ENCODE measurements at regions of chr3 and their contacts with region 1.

Region 1: DNA sequence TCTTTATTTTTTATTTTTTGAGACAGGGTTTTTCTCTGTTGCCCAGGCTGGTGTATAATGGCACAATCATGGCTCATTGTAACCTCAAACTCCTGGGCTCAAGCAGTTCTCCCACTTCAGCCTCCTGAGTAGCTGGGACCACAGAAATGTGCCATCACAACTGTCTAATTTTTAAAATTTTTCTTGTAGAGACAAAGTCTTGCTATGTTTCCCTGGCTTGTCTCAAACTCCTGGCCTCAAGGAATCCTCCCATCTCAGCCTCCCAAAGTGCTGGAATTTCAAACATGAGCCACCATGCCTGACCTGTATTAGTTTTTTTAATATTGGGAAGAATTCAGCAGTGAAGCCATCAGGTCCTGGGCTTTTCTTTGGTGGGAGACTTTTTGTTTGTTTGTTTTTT is 13.6 kb upstream of the CLDN11 start:
- DNase-seq: no peak
- ATAC-seq: no peak
- H3K4me3 ChIP-seq: no peak overlapping the region
- H3K27ac ChIP-seq: no peak overlapping the region
- H3K4me1 ChIP-seq: no peaks in the 10 kb centered on the region
- H3K27me3 ChIP-seq: no peaks in the 10 kb centered on the region
- CTCF ChIP-seq: no peak
- POLR2A ChIP-seq: no peak
- RAD21 ChIP-seq: no peak

Region 2: DNA sequence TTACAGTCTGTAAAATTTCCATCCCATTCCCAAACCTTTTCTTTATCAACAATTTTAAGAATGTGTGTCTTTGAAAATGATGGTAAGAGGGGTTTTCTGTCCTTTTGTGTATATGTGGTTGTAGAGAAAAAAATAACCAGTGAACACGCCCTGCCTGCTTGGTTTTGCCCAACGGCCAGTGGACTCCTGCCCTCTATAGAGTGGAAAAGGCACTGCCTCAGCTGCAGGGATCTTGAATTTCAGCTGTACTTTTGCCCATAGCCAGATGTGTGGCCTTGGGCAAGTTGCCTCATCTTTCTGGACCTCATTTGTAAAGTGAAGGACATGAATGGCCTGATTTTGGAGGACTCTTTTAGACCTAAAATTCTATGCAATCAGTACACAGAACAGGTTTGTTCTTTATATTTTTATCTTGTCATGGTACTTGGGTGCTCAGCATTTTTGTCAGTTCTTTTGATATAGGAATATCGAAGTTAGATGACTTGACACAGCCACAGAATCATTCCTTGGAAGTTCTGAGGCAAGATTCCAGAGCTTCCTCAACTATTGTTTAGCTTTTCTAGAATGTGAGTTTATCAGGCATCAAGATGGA is 94.6 kb after region 1 on chr3:
- CTCF ChIA-PET with region 1: no interaction called
- POLR2A ChIA-PET with region 1: no interaction called
- RAD21 ChIA-PET with region 1: no interaction called
- intact Hi-C with region 1: loop called (anchors 5 kb)
- DNase-seq: peak; percentile 16
- ATAC-seq: peak; percentile 96
- H3K4me3 ChIP-seq: no peak overlapping the region
- H3K27ac ChIP-seq: no peak overlapping the region
- H3K4me1 ChIP-seq: no peaks in the 10 kb centered on the region
- H3K27me3 ChIP-seq: no peaks in the 10 kb centered on the region
- CTCF ChIP-seq: peak; percentile 39 to 82 (median 69); a peak in 5 of 6 replicates
- POLR2A ChIP-seq: no peak
- RAD21 ChIP-seq: peak; percentile 55